Activated CD8-positive, alpha-beta T cell treated with anti-CD3 and anti-CD28 coated beads, Interleukin-2, amount 10 ng/mL, durations not matched to agents 7 days and 5 days (primary cell): ENCODE measurements at regions of chr1 and their contacts with region 1.

Region 1: GRCh38 chr1:12658531-12659453 is 14.9 kb downstream of the AADACL4 start:
- DNase-seq: peak; percentile 78
- ATAC-seq: peak; percentile 81
- H3K4me3 Mint-ChIP-seq: peak overlapping the region; percentile 47
- H3K27ac Mint-ChIP-seq: peak overlapping the region; percentile 0
- H3K4me1 Mint-ChIP-seq: peaks cover 12% of the 10 kb centered on the region
- H3K27me3 Mint-ChIP-seq: peaks cover 10% of the 10 kb centered on the region

Region 2: DNA sequence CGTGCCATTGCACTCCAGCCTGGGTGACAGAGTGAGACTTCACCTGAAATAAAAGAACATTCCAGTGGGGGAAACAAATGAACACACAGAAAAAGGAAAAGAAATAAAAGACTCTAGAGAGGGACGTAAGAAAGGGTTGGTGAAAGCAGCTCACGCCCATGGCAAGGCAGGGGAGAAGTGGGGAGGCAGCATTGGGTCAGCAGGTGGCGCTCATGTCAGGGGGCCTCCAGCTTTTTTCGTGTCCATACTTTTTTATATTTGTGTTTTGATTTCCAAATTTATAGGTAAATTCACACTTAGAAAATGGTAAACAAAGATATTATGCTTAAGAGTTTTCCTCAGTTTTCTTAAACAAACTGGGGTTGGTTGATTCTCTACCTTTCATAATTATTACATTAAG is 383.4 kb before region 1 on chr1:
- CTCF ChIA-PET with region 1: interaction called, 121 read pairs
- POLR2A ChIA-PET with region 1: no interaction called
- DNase-seq: peak; percentile 58
- ATAC-seq: no peak
- H3K4me3 Mint-ChIP-seq: no peak overlapping the region
- H3K27ac Mint-ChIP-seq: no peak overlapping the region
- H3K4me1 Mint-ChIP-seq: no peaks in the 10 kb centered on the region
- H3K27me3 Mint-ChIP-seq: no peaks in the 10 kb centered on the region

Region 3: GRCh38 chr1:12320516-12320915 is 338.3 kb before region 1 on chr1:
- CTCF ChIA-PET with region 1: interaction called, 89 read pairs
- POLR2A ChIA-PET with region 1: no interaction called
- DNase-seq: no peak
- ATAC-seq: no peak
- H3K4me3 Mint-ChIP-seq: no peak overlapping the region
- H3K27ac Mint-ChIP-seq: no peak overlapping the region
- H3K4me1 Mint-ChIP-seq: peaks cover 6% of the 10 kb centered on the region
- H3K27me3 Mint-ChIP-seq: no peaks in the 10 kb centered on the region

Region 4: GRCh38 chr1:12407050-12407961 is 251.5 kb before region 1 on chr1:
- CTCF ChIA-PET with region 1: interaction called, 15 read pairs
- POLR2A ChIA-PET with region 1: no interaction called
- DNase-seq: peak; percentile 55
- ATAC-seq: peak; percentile 76
- H3K4me3 Mint-ChIP-seq: no peak overlapping the region
- H3K27ac Mint-ChIP-seq: no peak overlapping the region
- H3K4me1 Mint-ChIP-seq: peaks cover 39% of the 10 kb centered on the region
- H3K27me3 Mint-ChIP-seq: no peaks in the 10 kb centered on the region

Region 5: GRCh38 chr1:12640237-12640957 is 18.4 kb before region 1 on chr1:
- CTCF ChIA-PET with region 1: interaction called, 14 read pairs
- POLR2A ChIA-PET with region 1: no interaction called
- DNase-seq: no peak
- ATAC-seq: no peak
- H3K4me3 Mint-ChIP-seq: no peak overlapping the region
- H3K27ac Mint-ChIP-seq: no peak overlapping the region
- H3K4me1 Mint-ChIP-seq: no peaks in the 10 kb centered on the region
- H3K27me3 Mint-ChIP-seq: peaks cover 2% of the 10 kb centered on the region

Region 6: DNA sequence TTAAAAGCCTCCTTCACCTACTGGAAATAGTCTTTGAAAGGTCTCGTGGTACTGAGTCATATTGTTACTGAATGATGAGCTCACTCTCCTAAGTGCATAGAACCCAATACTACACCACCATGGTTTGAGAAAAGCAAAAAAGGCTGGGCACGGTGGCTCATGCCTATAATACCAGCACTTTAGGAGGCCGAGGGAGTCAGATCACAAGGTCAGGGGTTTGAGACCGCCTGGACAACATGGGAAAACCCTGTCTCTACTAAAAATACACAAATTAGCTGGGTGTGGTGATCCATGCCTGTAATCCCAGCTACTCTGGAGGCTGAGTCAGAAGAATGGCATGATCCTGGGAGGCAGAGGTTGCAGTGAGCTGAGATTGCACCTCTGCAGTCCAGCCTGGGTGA is 193.0 kb after region 1 on chr1:
- CTCF ChIA-PET with region 1: no interaction called
- POLR2A ChIA-PET with region 1: no interaction called
- DNase-seq: no peak
- ATAC-seq: no peak
- H3K4me3 Mint-ChIP-seq: no peak overlapping the region
- H3K27ac Mint-ChIP-seq: no peak overlapping the region
- H3K4me1 Mint-ChIP-seq: no peaks in the 10 kb centered on the region
- H3K27me3 Mint-ChIP-seq: peaks cover 3% of the 10 kb centered on the region